ENCODE measurements at regions of chr13 and their contacts with region 1.

Region 1: DNA sequence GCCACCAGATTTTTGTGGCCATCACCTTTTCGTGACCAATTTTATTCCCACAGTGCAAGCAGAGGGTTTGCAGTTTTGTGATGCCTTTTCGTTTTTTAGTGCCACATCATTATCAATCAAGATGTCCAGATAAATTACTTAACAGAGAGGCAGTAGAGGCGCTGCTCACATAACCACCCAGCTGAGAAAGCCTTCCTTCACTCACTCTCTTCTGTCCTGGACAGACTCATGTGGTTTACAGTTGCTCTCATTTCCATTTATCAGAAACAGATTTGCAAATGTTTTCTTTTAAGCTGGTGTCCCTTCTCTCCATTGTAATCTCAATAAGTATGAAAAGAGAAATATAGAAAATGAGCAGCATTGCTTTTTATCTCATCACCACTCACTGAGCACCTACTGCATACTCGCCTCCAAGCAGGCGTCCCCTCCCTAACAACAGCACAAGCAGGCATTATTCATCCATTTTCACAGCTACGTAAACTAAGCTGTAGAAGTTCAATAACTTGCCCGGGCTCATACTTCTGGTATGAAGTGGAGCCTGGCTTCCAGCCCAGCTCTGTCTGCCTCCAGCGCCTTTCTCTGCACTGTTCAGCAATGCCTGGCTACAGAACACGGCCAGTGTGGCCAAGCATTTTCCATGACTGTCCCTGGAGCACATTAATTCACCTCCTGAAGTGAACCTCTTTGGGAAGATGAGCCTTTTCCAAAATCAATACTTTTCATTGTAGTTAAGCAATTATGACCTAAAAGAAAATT is 34.6 kb upstream of the KATNAL1 start:
- DNase-seq: peak; percentile 89
- H3K4me3 ChIP-seq: no peak overlapping the region
- H3K27ac ChIP-seq: peak overlapping the region; percentile 61
- H3K4me1 ChIP-seq: peaks cover 48% of the 10 kb centered on the region
- H3K27me3 ChIP-seq: no peaks in the 10 kb centered on the region
- CTCF ChIP-seq: no peak

Region 2: GRCh38 chr13:30017880-30018279 is 324.1 kb before region 1 on chr13:
- CTCF ChIA-PET with region 1: no interaction called
- dilution Hi-C with region 1: no loop called
- in situ Hi-C with region 1: no loop called
- intact Hi-C with region 1: no loop called
- DNase-seq: no peak
- H3K4me3 ChIP-seq: no peak overlapping the region
- H3K27ac ChIP-seq: no peak overlapping the region
- H3K4me1 ChIP-seq: peaks cover 5% of the 10 kb centered on the region
- H3K27me3 ChIP-seq: no peaks in the 10 kb centered on the region
- CTCF ChIP-seq: no peak

Region 3: GRCh38 chr13:30306762-30307193 is 35.2 kb before region 1 on chr13:
- CTCF ChIA-PET with region 1: no interaction called
- dilution Hi-C with region 1: no loop called
- in situ Hi-C with region 1: no loop called
- intact Hi-C with region 1: loop called (anchors 2 kb)
- DNase-seq: peak; percentile 87
- H3K4me3 ChIP-seq: peak overlapping the region; percentile 94 to 96 (median 96)
- H3K27ac ChIP-seq: peak overlapping the region; percentile 67
- H3K4me1 ChIP-seq: peaks cover 23% of the 10 kb centered on the region
- H3K27me3 ChIP-seq: no peaks in the 10 kb centered on the region
- CTCF ChIP-seq: no peak

Region 4: DNA sequence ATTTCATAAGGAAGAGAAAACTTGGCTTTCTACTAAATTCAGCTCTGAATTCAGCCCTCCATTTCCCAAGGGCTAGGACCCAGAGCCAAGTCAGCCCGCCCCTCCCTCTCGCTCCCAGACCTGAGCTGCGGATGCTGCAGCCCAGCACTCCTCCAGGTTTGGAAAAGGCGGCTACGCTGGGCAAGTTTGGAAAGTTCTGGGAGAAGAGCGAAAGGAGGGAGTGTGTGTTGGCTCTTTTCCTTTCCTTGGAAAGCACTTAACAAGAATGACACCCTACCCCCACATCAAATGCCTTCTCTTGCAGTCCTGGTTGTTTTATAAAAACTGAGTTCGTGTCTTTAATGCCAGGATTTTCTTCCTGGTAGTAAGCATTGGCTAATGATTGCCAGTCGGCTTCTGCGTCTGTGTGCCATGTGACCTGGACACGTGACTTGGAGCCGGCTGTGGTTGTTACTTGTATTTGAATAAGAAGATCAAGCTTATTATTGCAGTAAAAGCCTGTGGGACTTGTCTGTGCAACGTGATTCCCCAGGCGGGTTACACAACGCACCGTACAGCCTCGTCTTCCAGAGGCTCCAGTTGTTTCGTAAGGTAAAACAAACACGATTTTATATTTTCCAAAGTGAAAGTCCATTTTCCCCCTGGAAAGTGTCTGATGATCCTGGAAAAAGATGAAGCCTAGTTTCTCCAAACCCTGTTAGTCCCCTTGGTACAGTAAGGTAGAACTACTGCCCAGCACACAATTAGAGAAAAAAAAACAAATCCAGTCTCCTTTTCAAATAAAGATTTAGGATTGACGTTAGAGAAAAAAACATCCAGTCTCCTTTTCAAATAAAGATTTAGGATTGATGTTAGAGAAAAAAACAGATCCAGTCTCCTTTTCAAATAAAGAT is 53.4 kb after region 1 on chr13:
- CTCF ChIA-PET with region 1: interaction called, 3 read pairs
- dilution Hi-C with region 1: no loop called
- in situ Hi-C with region 1: no loop called
- intact Hi-C with region 1: loop called (anchors 1 kb)
- DNase-seq: peak; percentile 87
- H3K4me3 ChIP-seq: peak overlapping the region; percentile 54 to 69 (median 56)
- H3K27ac ChIP-seq: peak overlapping the region; percentile 81
- H3K4me1 ChIP-seq: peaks cover 9% of the 10 kb centered on the region
- H3K27me3 ChIP-seq: no peaks in the 10 kb centered on the region
- CTCF ChIP-seq: no peak

Region 5: GRCh38 chr13:30435911-30436451 is 94.0 kb after region 1 on chr13:
- CTCF ChIA-PET with region 1: no interaction called
- dilution Hi-C with region 1: loop called (anchors 5 kb)
- in situ Hi-C with region 1: no loop called
- intact Hi-C with region 1: no loop called
- DNase-seq: no peak
- H3K4me3 ChIP-seq: no peak overlapping the region
- H3K27ac ChIP-seq: no peak overlapping the region
- H3K4me1 ChIP-seq: peaks cover 16% of the 10 kb centered on the region
- H3K27me3 ChIP-seq: no peaks in the 10 kb centered on the region
- CTCF ChIP-seq: no peak

Measured in mammary epithelial cell (primary cell).